Activated CD4-positive, alpha-beta T cell treated with anti-CD3 and anti-CD28 coated beads for 36 hours (primary cell): ENCODE measurements at regions of chr7 and their contacts with region 1.

Region 1: DNA sequence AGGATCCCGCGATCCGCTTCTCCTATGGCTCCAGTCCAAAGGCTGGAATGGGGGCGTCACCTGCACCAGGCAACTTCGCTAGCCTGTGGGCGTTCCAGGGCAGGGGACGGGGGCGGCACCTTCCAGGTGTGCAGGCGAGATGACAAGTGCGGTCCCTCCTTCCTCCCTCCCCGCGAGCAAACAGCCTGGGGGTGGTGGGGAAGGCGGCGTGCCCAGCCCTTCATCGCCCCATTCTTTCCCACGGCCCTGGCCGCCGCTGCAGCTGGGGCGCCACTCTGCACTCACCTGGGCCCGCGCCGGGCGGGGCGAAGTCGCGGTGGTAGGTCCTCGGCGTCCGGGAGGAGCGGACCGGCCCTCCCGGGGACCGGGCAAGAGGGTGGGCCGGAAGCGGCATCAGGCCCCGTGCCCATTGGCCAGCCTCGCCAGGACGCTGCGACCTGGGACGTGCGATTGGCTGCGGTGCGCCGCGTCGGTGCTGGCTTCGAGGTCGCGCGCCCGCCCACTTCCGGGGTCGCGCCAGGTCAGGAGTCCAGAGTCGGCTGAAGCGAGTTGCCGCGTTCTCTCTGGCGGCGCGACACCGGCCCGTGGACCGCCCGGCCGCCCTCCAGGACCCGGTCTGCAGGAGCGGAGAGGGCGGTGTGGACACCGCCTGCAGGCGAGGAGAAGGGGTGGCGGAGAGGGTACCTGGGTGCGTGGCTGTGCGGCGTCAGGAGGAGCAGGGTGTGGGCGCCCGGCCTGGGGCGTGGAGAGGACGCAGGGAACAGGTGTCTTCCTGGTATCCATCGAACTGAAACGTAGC is at the start of gene TECPR1:
- DNase-seq: peak; percentile 94
- ATAC-seq: peak; percentile 92
- H3K4me3 Mint-ChIP-seq: peak within 1 kb of the TSS; percentile 93
- H3K27ac Mint-ChIP-seq: peak within 1 kb of the TSS; percentile 98
- H3K4me1 Mint-ChIP-seq: peaks cover 50% of the 10 kb centered on the region
- H3K27me3 Mint-ChIP-seq: no peaks in the 10 kb centered on the region
- total RNA-seq, gene TECPR1: 21.8 to 26.5 TPM

Region 2: DNA sequence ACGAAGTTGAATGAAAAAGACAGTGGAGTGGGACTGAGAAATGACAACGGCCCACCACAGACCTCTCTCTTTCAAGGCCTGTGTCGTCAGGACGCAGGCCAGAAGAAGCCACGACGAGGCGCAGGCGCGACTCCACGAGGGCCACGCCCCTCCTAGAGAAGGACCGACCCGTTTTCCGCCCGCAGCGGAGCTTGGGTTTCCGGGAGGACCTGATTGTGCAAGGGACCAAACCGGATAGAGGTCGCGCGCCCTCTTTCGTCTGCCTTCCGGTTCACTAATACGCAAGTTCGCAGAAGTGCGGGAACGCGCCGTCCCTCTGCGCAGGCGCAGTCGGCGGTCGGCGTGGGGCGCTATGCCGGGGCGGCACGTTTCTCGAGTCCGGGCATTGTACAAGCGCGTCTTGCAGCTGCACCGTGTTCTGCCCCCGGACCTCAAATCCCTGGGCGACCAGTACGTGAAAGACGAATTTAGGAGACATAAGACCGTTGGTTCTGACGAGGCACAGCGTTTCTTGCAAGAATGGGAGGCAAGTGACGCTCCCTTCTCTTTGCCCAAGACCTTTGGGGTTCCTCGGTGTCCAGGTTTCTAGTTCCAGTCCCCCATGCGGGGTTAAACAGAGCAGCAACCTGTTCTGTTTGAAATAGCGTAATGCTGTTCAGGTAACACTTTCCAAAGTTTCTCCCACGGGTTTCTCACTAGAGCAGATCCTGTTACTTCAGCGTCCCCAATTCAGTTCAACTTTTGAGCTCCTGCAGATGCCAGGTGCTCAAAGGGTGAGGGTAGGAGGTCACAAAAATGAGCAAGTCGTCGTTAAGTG is 1134.5 kb before region 1 on chr7 and contains the start of gene SDHAF3:
- CTCF ChIA-PET with region 1: no interaction called
- POLR2A ChIA-PET with region 1: no interaction called
- intact Hi-C with region 1: loop called in 1 of 2 experiments (anchors 1 kb)
- DNase-seq: peak; percentile 99
- ATAC-seq: peak; percentile 95
- H3K4me3 Mint-ChIP-seq: peak within 1 kb of the TSS; percentile 82
- H3K27ac Mint-ChIP-seq: peak within 1 kb of the TSS; percentile 95
- H3K4me1 Mint-ChIP-seq: peaks cover 38% of the 10 kb centered on the region
- H3K27me3 Mint-ChIP-seq: no peaks in the 10 kb centered on the region
- total RNA-seq, gene SDHAF3: 30.2 to 44.3 TPM

Region 3: DNA sequence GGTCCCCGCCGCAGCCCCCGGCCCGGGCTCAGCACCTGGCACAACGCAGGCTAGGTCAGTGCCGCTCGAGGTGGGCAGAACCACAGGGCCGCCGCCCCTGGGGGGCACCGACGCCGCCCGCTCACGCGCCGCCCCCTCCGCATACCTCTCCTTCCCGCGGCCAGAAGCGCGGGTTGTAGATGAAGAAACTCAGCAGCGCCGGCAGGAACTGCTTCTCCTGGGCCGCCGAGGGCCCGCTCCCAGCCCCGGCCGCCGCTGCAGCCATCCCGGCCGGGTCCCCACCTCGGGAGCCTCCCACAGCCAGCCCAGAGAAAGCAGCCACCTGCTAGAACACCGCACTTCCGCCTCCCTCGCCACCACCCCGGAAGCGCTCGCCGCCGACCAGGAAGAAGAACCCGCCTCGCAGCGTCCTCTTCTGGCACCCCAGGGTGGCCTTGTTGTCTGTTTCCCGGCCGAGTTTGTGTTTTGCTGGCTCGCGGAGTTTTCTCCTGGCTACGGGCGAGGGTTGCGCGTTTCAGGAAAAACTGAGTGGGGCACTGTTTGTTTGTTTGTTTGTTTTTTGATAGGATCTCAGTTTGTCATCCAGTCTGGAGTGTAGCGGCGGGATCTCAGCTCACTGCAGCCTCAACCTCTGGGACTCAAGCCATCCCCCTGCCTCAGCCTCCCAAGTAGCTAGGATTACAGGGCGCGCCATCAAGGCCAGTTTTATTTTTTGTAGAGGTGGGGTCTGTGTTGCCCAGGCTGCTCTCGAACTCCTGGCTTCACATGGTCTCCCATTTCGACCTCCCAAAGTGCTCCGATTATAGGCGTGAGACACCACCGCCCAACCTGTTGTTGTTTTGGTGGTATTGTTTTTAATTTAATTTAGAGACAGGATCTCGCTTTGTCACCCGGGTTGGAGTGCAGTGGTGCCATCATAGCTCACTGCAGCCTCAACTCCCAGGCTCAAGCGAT is 279.8 kb before region 1 on chr7:
- CTCF ChIA-PET with region 1: no interaction called
- POLR2A ChIA-PET with region 1: no interaction called
- intact Hi-C with region 1: loop called (anchors 2 kb)
- DNase-seq: peak; percentile 93
- ATAC-seq: peak; percentile 97
- H3K4me3 Mint-ChIP-seq: peak overlapping the region; percentile 98
- H3K27ac Mint-ChIP-seq: peak overlapping the region; percentile 97
- H3K4me1 Mint-ChIP-seq: peaks cover 19% of the 10 kb centered on the region
- H3K27me3 Mint-ChIP-seq: no peaks in the 10 kb centered on the region

Region 4: GRCh38 chr7:98133181-98133580 is 118.9 kb before region 1 on chr7:
- CTCF ChIA-PET with region 1: interaction called, 3 read pairs
- POLR2A ChIA-PET with region 1: no interaction called
- intact Hi-C with region 1: loop called in 1 of 2 experiments (anchors 1 kb)
- DNase-seq: peak; percentile 19
- ATAC-seq: peak; percentile 54
- H3K4me3 Mint-ChIP-seq: no peak overlapping the region
- H3K27ac Mint-ChIP-seq: no peak overlapping the region
- H3K4me1 Mint-ChIP-seq: peaks cover 50% of the 10 kb centered on the region
- H3K27me3 Mint-ChIP-seq: no peaks in the 10 kb centered on the region

Region 5: GRCh38 chr7:98315341-98315983 is 63.4 kb after region 1 on chr7:
- CTCF ChIA-PET with region 1: no interaction called
- POLR2A ChIA-PET with region 1: no interaction called
- intact Hi-C with region 1: no loop called
- DNase-seq: no peak
- ATAC-seq: no peak
- H3K4me3 Mint-ChIP-seq: no peak overlapping the region
- H3K27ac Mint-ChIP-seq: no peak overlapping the region
- H3K4me1 Mint-ChIP-seq: no peaks in the 10 kb centered on the region
- H3K27me3 Mint-ChIP-seq: no peaks in the 10 kb centered on the region

Region 6: GRCh38 chr7:98400542-98401340 is 148.7 kb after region 1 on chr7 and contains the start of gene BAIAP2L1:
- CTCF ChIA-PET with region 1: interaction called, 3 read pairs
- POLR2A ChIA-PET with region 1: no interaction called
- intact Hi-C with region 1: loop called in 1 of 2 experiments (anchors 1 kb)
- DNase-seq: peak; percentile 93
- ATAC-seq: peak; percentile 89
- H3K4me3 Mint-ChIP-seq: peak within 1 kb of the TSS; percentile 21
- H3K27ac Mint-ChIP-seq: no peak within 1 kb of the TSS
- H3K4me1 Mint-ChIP-seq: peaks cover 7% of the 10 kb centered on the region
- H3K27me3 Mint-ChIP-seq: peaks cover 20% of the 10 kb centered on the region
- total RNA-seq, gene BAIAP2L1: 2.3 to 3.0 TPM

Region 7: DNA sequence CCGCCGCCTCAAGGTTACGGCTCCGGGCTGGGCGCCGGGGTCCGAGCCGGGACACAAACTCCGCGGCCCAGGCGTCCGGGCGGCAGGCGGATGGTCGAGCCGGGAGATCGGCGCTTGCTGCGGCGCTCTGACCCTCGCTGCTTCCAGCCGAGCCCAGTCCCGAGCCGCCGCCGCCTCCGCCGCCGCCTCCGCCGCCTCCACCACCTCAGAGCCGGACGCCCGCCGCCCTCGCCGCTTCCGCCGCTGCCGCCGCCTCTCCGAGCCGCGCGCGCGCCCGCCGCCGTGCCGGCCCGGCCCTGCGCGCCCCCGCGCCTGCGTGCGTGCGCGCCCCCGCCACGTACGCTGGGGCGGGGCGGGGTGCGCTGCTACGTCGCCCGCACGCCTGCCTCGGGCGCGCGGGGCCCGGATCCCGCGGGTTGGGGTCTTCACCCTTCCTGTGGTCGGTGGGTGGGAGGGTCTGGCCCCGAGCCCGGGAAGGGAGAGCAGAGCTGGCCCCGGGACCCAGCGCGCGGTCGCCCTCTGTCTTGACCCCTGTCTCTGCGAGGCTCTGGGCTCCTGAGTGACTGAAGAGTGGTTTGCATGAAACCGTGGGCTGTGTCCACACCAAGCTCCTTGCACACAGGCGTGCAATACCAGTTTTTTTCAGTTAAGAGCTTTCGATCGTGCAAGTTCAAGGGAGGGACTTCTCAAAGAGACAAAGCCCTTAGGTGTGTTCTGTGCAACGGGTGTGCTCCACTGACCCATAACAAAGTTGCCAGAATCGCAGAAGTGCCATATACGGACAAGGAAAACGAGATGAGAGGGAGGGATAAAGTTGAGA is 892.0 kb after region 1 on chr7 and contains the start of gene SMURF1:
- CTCF ChIA-PET with region 1: no interaction called
- POLR2A ChIA-PET with region 1: no interaction called
- intact Hi-C with region 1: loop called in 1 of 2 experiments (anchors 5 kb)
- DNase-seq: peak; percentile 83
- ATAC-seq: peak; percentile 37
- H3K4me3 Mint-ChIP-seq: peak within 1 kb of the TSS; percentile 91
- H3K27ac Mint-ChIP-seq: peak within 1 kb of the TSS; percentile 93
- H3K4me1 Mint-ChIP-seq: peaks cover 35% of the 10 kb centered on the region
- H3K27me3 Mint-ChIP-seq: peaks cover 5% of the 10 kb centered on the region
- total RNA-seq, gene SMURF1: 12.4 to 13.4 TPM